Naive thymus-derived CD4-positive, alpha-beta T cell (primary cell): ENCODE measurements at regions of chr17 and their contacts with region 1.

Region 1: DNA sequence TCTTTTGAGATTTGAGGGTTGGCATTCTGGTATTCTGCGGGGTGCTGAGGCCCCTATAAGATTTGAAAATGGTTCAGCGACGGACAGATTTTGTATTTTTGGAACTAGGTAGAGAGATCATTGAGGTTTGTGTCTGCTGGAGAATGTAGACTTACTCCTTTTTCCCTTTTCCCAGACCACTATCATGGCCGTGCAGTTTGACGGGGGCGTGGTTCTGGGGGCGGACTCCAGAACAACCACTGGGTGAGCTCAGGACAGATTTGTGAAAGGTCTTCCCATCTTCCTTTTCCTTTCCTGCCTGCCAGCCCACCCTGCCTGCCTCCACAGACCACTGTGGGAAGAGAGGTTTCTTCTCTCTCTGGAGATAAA is 573 bp downstream of the PSMB6 start:
- DNase-seq: peak in 1 of 9 donors; percentile 43
- ATAC-seq: no peak
- H3K4me3 ChIP-seq: peak overlapping the region; percentile 76
- H3K4me3 Mint-ChIP-seq: peak overlapping the region; percentile 96 to 100 (median 99)
- H3K27ac ChIP-seq: peak overlapping the region; percentile 84
- H3K27ac Mint-ChIP-seq: peak overlapping the region; percentile 90 to 99 (median 96)
- H3K4me1 ChIP-seq: peaks cover 7% of the 10 kb centered on the region in 2 donors
- H3K4me1 Mint-ChIP-seq: peaks cover 12 to 14% (median 13%) of the 10 kb centered on the region in 7 donors
- H3K27me3 ChIP-seq: no peaks in the 10 kb centered on the region
- H3K27me3 Mint-ChIP-seq: peaks cover 0 to 6% (median 0%) of the 10 kb centered on the region in 5 donors

Region 2: DNA sequence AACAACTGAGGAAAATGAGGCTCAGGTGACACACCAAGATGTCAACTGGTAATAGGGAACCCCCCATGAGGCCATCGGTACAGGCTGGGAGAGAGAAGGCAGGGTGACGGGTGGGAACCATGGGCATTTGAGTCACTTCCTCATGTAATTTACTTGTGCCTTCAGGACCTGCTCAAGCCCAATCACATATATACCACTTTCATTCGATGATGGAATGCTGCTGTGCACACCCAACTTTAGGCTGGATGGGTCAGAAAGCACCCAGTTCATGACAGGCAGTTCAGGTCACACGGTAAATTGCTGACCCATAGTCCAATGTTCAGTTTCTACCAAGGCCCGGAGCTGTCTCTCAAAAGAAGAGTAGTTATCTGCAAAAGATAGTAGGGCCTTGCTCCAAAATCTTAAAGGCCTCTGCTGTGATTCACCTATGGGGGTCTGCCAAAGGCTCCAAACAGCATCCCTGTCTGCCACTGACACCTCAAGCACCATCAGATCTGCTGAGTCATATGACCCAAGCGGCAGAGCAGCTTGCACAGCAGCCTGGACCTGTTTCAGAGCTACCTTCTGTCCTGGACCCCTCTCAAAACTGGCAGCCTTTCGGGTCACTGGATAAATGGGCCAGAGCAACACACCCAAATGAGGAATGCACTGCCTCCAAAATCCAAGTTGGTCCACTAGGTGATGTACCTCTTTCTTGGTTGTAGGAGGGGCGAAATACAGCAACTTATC is 678.4 kb before region 1 on chr17:
- CTCF ChIA-PET with region 1: no interaction called
- POLR2A ChIA-PET with region 1: no interaction called
- intact Hi-C with region 1: no loop called
- DNase-seq: no peak
- ATAC-seq: no peak
- H3K4me3 ChIP-seq: no peak overlapping the region
- H3K4me3 Mint-ChIP-seq: no peak overlapping the region
- H3K27ac ChIP-seq: no peak overlapping the region
- H3K27ac Mint-ChIP-seq: peak overlapping the region in 2 of 9 donors; percentile 3 to 76
- H3K4me1 ChIP-seq: no peaks in the 10 kb centered on the region
- H3K4me1 Mint-ChIP-seq: peaks cover 0 to 11% (median 4%) of the 10 kb centered on the region in 7 donors
- H3K27me3 ChIP-seq: no peaks in the 10 kb centered on the region
- H3K27me3 Mint-ChIP-seq: no peaks in the 10 kb centered on the region

Region 3: DNA sequence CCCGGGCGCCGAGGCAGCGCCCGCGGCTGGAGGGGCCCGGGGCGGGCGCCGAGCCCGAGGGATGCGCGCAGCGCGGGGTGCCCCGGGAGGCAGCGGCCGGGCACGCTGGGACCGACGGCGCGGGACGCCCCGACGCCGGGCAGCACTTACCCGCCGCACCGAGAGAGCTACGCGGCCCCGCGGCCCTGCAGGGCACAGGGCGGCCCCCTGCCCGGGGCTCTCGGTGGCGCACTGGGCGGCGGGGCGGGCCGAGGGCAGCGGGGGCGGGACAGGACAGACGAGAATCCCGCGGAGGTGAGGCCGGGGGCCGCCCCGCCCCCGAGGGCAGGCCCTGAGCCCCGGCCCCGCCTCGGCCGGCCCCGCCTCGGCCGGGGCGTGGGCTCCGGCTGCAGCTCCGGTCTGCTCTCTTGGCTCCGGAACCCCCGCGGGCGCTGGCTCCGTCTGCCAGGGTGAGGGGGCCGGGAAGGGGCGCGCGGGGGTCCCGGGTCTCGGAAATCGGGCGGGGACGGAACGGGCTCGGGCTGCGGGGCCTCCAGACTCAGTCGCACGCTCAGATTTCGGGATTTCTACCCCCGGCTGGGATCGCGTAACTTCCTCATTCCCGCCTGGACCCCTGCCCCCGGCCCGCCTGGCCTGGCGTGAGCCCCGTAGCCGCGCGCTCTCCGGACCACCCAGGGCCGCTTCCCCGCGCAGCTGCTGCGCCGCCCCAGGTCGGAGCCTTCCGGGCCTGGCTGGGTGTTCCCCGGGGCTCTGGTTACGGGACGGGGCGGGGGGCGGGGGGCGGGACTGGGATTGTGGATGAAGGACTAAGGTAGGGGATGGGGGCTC is 10.5 kb after region 1 on chr17 and contains the start of gene PLD2:
- CTCF ChIA-PET with region 1: no interaction called
- POLR2A ChIA-PET with region 1: interaction called, 16 read pairs
- intact Hi-C with region 1: loop called (anchors 1 kb)
- DNase-seq: peak; percentile 71 to 95 (median 80)
- ATAC-seq: peak; percentile 100
- H3K4me3 ChIP-seq: peak within 1 kb of the TSS; percentile 47
- H3K4me3 Mint-ChIP-seq: peak within 1 kb of the TSS; percentile 71 to 88 (median 80)
- H3K27ac ChIP-seq: peak within 1 kb of the TSS; percentile 79
- H3K27ac Mint-ChIP-seq: peak within 1 kb of the TSS in 7 of 9 donors; percentile 48 to 78 (median 62)
- H3K4me1 ChIP-seq: peaks cover 0 to 5% of the 10 kb centered on the region in 2 donors
- H3K4me1 Mint-ChIP-seq: peaks cover 7 to 23% (median 19%) of the 10 kb centered on the region in 7 donors
- H3K27me3 ChIP-seq: no peaks in the 10 kb centered on the region
- H3K27me3 Mint-ChIP-seq: peaks cover 0 to 7% (median 0%) of the 10 kb centered on the region in 5 donors
- total RNA-seq, gene PLD2: 22.9 to 42.7 (median 26.8) TPM

Region 4: GRCh38 chr17:4948931-4949320 is 152.4 kb after region 1 on chr17:
- CTCF ChIA-PET with region 1: no interaction called
- POLR2A ChIA-PET with region 1: no interaction called
- intact Hi-C with region 1: loop called in 1 of 2 experiments (anchors 2 kb)
- DNase-seq: peak in 7 of 9 donors; percentile 69 to 84 (median 79)
- ATAC-seq: peak; percentile 58
- H3K4me3 ChIP-seq: peak overlapping the region; percentile 98
- H3K4me3 Mint-ChIP-seq: peak overlapping the region; percentile 92 to 100 (median 98)
- H3K27ac ChIP-seq: peak overlapping the region; percentile 89
- H3K27ac Mint-ChIP-seq: peak overlapping the region; percentile 83 to 100 (median 96)
- H3K4me1 ChIP-seq: peaks cover 27 to 35% of the 10 kb centered on the region in 2 donors
- H3K4me1 Mint-ChIP-seq: peaks cover 37 to 50% (median 43%) of the 10 kb centered on the region in 7 donors
- H3K27me3 ChIP-seq: no peaks in the 10 kb centered on the region
- H3K27me3 Mint-ChIP-seq: peaks cover 0 to 2% (median 0%) of the 10 kb centered on the region in 5 donors

Region 5: GRCh38 chr17:5325851-5326250 is 529.3 kb after region 1 on chr17:
- CTCF ChIA-PET with region 1: no interaction called
- POLR2A ChIA-PET with region 1: no interaction called
- intact Hi-C with region 1: no loop called
- DNase-seq: no peak
- ATAC-seq: no peak
- H3K4me3 ChIP-seq: no peak overlapping the region
- H3K4me3 Mint-ChIP-seq: no peak overlapping the region
- H3K27ac ChIP-seq: no peak overlapping the region
- H3K27ac Mint-ChIP-seq: peak overlapping the region in 1 of 9 donors; percentile 14
- H3K4me1 ChIP-seq: peaks cover 4 to 8% of the 10 kb centered on the region in 2 donors
- H3K4me1 Mint-ChIP-seq: peaks cover 19 to 52% (median 43%) of the 10 kb centered on the region in 7 donors
- H3K27me3 ChIP-seq: no peaks in the 10 kb centered on the region
- H3K27me3 Mint-ChIP-seq: no peaks in the 10 kb centered on the region